Heart right ventricle (tissue), 16 donors: ENCODE measurements at regions of chr15 and their contacts with region 1.

Region 1: GRCh38 chr15:66619151-66619903 is 53.5 kb upstream of the LCTL start:
- DNase-seq: peak; percentile 76 to 78
- ATAC-seq: peak; percentile 51 to 79 (median 67)
- H3K4me3 ChIP-seq: no peak overlapping the region
- H3K27ac ChIP-seq: peak overlapping the region; percentile 2 to 91 (median 70)
- H3K4me1 ChIP-seq: peaks cover 9 to 76% (median 49%) of the 10 kb centered on the region in 9 donors
- H3K27me3 ChIP-seq: peaks cover 0 to 12% (median 0%) of the 10 kb centered on the region in 7 donors
- CTCF ChIP-seq: peak; percentile 88 to 94 (median 93)

Region 2: GRCh38 chr15:66661432-66662096 is 42.2 kb after region 1 on chr15:
- intact Hi-C with region 1: loop called in 3 of 10 experiments (anchors 5 kb)
- DNase-seq: peak; percentile 66 to 86
- ATAC-seq: peak; percentile 80 to 95 (median 90)
- H3K4me3 ChIP-seq: no peak overlapping the region
- H3K27ac ChIP-seq: peak overlapping the region; percentile 77 to 93 (median 84)
- H3K4me1 ChIP-seq: peaks cover 4 to 56% (median 8%) of the 10 kb centered on the region in 9 donors
- H3K27me3 ChIP-seq: no peaks in the 10 kb centered on the region
- CTCF ChIP-seq: no peak

Region 3: GRCh38 chr15:66707310-66708082 is 88.2 kb after region 1 on chr15:
- intact Hi-C with region 1: loop called in 3 of 10 experiments (anchors 5 kb)
- DNase-seq: peak in 1 of 2 donors; percentile 50
- ATAC-seq: peak in 7 of 8 donors; percentile 5 to 71 (median 37)
- H3K4me3 ChIP-seq: peak overlapping the region in 7 of 10 donors; percentile 62 to 85 (median 77)
- H3K27ac ChIP-seq: peak overlapping the region in 9 of 10 donors; percentile 9 to 97 (median 93)
- H3K4me1 ChIP-seq: peaks cover 7 to 78% (median 44%) of the 10 kb centered on the region in 9 donors
- H3K27me3 ChIP-seq: peaks cover 0 to 28% (median 0%) of the 10 kb centered on the region in 7 donors
- CTCF ChIP-seq: peak in 3 of 9 donors; percentile 33 to 37 (median 34)

Region 4: GRCh38 chr15:66765478-66766281 is 146.4 kb after region 1 on chr15:
- intact Hi-C with region 1: loop called in 3 of 10 experiments (anchors 5 to 10 kb)
- DNase-seq: peak in 1 of 2 donors; percentile 58
- ATAC-seq: peak in 3 of 8 donors; percentile 2 to 5 (median 4)
- H3K4me3 ChIP-seq: no peak overlapping the region
- H3K27ac ChIP-seq: peak overlapping the region in 7 of 10 donors; percentile 35 to 96 (median 66)
- H3K4me1 ChIP-seq: peaks cover 39 to 87% (median 69%) of the 10 kb centered on the region in 9 donors
- H3K27me3 ChIP-seq: peaks cover 0 to 7% (median 0%) of the 10 kb centered on the region in 7 donors
- CTCF ChIP-seq: no peak

Region 5: DNA sequence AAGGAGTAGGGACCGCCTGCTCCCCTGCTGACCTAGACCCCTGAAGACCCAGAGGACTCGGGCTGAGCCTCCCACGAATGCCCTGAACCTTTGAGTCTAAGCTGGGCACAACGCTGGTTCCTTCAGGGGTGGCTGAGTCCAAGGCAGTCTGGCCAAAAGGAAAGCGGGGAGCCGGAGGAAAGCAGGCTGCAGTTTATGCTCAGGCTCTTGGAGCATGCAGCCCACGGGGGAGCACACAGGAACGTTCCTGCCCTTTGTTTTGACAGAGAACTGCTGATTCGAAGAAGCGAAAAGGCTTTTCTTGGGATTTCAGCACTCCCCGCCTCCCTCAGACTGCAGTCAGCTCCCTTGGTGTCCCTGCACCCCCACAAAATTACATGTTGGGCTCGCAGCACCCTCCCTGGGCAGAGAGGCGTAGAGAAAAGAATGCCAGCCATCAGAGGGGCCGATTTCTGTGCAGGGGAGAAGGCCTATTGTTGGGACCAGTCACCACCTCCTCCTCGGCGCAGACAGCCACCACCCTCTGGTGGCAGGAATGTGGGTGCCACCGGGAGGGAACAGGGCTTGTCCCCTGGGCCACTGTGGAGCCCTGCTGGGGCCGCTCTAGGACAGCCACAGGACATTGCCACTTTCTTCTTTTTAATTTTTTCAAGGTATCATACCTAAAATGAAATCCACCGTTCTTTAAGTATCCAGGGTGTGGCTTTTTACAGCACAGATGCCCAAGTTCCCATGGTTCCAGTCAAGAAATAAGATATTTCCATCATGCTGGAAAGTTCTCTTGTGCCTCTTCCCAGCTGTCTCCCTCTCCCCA is 154.9 kb after region 1 on chr15:
- intact Hi-C with region 1: loop called in 9 of 10 experiments (anchors 1 to 10 kb)
- DNase-seq: peak; percentile 89
- ATAC-seq: peak; percentile 86 to 96 (median 92)
- H3K4me3 ChIP-seq: no peak overlapping the region
- H3K27ac ChIP-seq: peak overlapping the region in 8 of 10 donors; percentile 59 to 80 (median 72)
- H3K4me1 ChIP-seq: peaks cover 12 to 93% (median 58%) of the 10 kb centered on the region in 9 donors
- H3K27me3 ChIP-seq: no peaks in the 10 kb centered on the region
- CTCF ChIP-seq: peak; percentile 94 to 100 (median 96)

Region 6: GRCh38 chr15:66851226-66852071 is 232.1 kb after region 1 on chr15:
- intact Hi-C with region 1: loop called (anchors 5 kb)
- DNase-seq: peak; percentile 87 to 88
- ATAC-seq: peak; percentile 86 to 94 (median 90)
- H3K4me3 ChIP-seq: peak overlapping the region in 3 of 10 donors; percentile 10 to 23 (median 12)
- H3K27ac ChIP-seq: peak overlapping the region in 8 of 10 donors; percentile 72 to 92 (median 79)
- H3K4me1 ChIP-seq: peaks cover 15 to 38% (median 33%) of the 10 kb centered on the region in 9 donors
- H3K27me3 ChIP-seq: no peaks in the 10 kb centered on the region
- CTCF ChIP-seq: peak; percentile 94 to 99 (median 98)

Region 7: GRCh38 chr15:66862878-66863335 is 243.6 kb after region 1 on chr15:
- intact Hi-C with region 1: loop called in 1 of 10 experiments (anchors 5 kb)
- DNase-seq: peak; percentile 82 to 84
- ATAC-seq: peak; percentile 71 to 92 (median 87)
- H3K4me3 ChIP-seq: no peak overlapping the region
- H3K27ac ChIP-seq: no peak overlapping the region
- H3K4me1 ChIP-seq: peaks cover 0 to 33% (median 21%) of the 10 kb centered on the region in 9 donors
- H3K27me3 ChIP-seq: no peaks in the 10 kb centered on the region
- CTCF ChIP-seq: peak; percentile 90 to 97 (median 93)